ENCODE measurements at regions of chr17 and their contacts with region 1.

Region 1: DNA sequence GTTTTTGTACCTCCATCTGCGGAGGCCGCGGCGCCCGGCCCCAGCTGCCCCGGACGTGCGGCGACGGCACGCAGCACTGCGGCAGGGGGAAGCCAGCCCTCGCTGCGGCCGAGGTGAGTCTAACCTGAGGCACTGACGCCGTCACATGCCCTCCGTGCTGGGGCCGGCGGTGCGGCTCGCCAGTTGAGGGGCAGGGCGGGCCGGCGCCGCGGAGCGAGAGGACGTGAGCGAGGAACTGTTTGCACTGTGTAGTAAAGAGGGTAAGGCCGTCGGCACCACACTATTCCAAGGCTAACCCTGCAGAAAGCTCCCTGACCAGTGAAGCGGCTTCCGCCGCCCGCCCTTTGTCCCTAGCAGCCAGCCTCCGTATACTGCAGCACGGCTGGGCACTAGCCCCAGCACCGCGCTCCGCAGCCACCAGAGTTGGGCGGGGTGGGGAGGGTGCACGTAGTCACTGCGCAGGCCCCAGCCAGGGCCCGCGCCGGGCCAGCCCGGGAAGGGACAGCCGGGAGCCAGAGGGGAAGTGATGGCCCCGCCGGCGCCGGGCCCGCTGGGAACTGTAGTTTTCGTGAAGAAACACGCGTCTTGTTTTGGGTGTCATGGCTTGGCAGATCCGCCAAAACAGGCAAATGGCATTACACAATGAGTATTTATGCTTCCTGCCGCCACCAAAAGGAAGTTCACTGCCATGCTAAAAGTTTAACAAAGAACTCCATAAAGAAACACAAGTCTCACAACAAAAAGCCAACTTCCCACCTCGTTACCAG is 580 bp upstream of the KANSL1 start:
- DNase-seq: peak; percentile 95
- H3K4me3 Mint-ChIP-seq: peak overlapping the region; percentile 80
- H3K27ac Mint-ChIP-seq: peak overlapping the region; percentile 94
- H3K4me1 Mint-ChIP-seq: peaks cover 54% of the 10 kb centered on the region
- H3K27me3 Mint-ChIP-seq: no peaks in the 10 kb centered on the region

Region 2: DNA sequence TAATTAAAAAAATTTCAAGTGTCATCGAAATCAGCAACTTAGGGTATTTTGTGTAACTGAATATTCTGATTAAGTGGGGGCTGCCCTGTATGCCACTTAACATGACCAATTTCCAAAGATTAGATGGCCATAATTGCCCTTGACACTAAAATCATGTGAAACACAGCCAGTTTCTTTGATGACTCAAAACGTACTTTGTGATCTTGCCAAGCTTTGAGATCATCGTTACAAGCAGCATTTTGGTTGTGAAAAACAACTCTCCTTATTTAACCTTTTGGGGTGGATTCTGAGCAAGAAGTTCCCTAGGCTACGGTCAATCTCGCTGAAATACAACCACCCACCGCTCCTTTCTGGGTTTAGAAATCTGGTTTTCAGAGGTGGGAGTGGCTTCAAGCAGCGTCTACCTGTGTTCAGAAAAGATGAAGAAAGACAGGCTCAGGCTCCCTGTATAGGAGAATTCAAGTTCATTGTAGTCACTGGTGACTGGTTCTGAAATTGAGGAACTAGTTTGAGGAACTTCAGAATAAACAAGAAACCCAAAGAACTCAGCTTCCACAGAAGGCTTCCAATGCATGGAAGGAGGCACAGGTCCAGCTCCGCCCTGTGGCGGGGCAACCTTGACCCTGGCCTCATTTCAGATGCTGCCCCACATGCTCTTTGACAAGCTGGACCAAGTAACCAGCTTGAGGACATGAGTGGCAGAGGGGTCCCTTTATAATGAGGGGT is 886.4 kb before region 1 on chr17:
- CTCF ChIA-PET with region 1: no interaction called
- intact Hi-C with region 1: loop called (anchors 5 kb)
- DNase-seq: peak; percentile 77
- H3K4me3 Mint-ChIP-seq: peak overlapping the region; percentile 48
- H3K27ac Mint-ChIP-seq: peak overlapping the region; percentile 91
- H3K4me1 Mint-ChIP-seq: peaks cover 87% of the 10 kb centered on the region
- H3K27me3 Mint-ChIP-seq: no peaks in the 10 kb centered on the region

Region 3: GRCh38 chr17:46139432-46140210 is 54.2 kb before region 1 on chr17:
- CTCF ChIA-PET with region 1: no interaction called
- intact Hi-C with region 1: loop called (anchors 5 kb)
- DNase-seq: no peak
- H3K4me3 Mint-ChIP-seq: no peak overlapping the region
- H3K27ac Mint-ChIP-seq: no peak overlapping the region
- H3K4me1 Mint-ChIP-seq: peaks cover 90% of the 10 kb centered on the region
- H3K27me3 Mint-ChIP-seq: no peaks in the 10 kb centered on the region

Region 4: GRCh38 chr17:46154151-46154816 is 39.5 kb before region 1 on chr17:
- CTCF ChIA-PET with region 1: interaction called, 14 read pairs
- intact Hi-C with region 1: no loop called
- DNase-seq: peak; percentile 61
- H3K4me3 Mint-ChIP-seq: peak overlapping the region; percentile 38
- H3K27ac Mint-ChIP-seq: peak overlapping the region; percentile 59
- H3K4me1 Mint-ChIP-seq: peaks cover 89% of the 10 kb centered on the region
- H3K27me3 Mint-ChIP-seq: no peaks in the 10 kb centered on the region

Region 5: GRCh38 chr17:46212634-46213435 is 19.0 kb after region 1 on chr17:
- CTCF ChIA-PET with region 1: interaction called, 58 read pairs
- intact Hi-C with region 1: loop called (anchors 1 kb)
- DNase-seq: peak; percentile 78
- H3K4me3 Mint-ChIP-seq: no peak overlapping the region
- H3K27ac Mint-ChIP-seq: peak overlapping the region; percentile 20
- H3K4me1 Mint-ChIP-seq: peaks cover 34% of the 10 kb centered on the region
- H3K27me3 Mint-ChIP-seq: no peaks in the 10 kb centered on the region